ENCODE measurements at regions of chr4 and their contacts with region 1.

Region 1: DNA sequence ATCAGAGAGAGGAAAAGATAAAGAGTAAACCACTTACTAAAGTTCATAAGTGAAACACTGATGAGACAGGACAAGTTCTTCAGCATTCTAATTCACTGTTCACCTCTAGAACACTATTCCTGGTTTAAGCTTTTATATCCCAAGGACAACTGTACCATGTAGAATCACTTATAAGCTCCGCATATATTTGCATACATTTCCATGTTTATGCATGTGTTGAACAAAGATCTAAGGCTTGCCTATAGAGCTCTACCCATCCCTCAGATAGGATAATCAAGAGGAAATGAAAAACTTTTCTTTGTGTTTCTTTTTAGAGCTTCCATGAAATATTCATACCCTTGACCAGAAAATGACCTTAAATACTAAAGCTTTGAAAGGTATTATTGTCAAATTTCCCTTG is 156.9 kb upstream of the BMP3 start:
- DNase-seq: no peak
- ATAC-seq: no peak
- H3K4me3 ChIP-seq: no peak overlapping the region
- H3K27ac ChIP-seq: no peak overlapping the region
- H3K4me1 ChIP-seq: no peaks in the 10 kb centered on the region
- H3K27me3 ChIP-seq: no peaks in the 10 kb centered on the region
- CTCF ChIP-seq: no peak

Region 2: DNA sequence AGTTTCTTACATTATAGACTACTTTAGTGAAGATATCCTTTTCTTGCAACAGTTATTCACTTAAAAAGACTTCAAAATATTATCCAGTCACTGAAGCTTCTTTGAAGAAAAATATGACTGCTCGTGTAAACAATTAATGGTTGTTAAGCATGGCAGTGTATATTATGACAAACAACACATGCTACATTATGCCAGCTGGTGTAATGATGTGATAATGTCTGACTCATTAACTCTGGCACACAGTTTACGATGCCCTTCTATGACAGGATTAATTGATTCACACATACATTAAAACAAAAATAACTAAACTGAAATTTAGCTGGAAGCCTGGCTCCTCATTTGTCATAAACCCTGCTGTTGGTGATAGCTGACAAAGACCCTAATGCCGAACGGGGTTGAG is 1487.9 kb before region 1 on chr4:
- intact Hi-C with region 1: loop called in 1 of 10 experiments (anchors 5 kb)
- DNase-seq: no peak
- ATAC-seq: no peak
- H3K4me3 ChIP-seq: no peak overlapping the region
- H3K27ac ChIP-seq: no peak overlapping the region
- H3K4me1 ChIP-seq: no peaks in the 10 kb centered on the region
- H3K27me3 ChIP-seq: no peaks in the 10 kb centered on the region
- CTCF ChIP-seq: no peak

Measured in heart right ventricle (tissue), 16 donors.